Activated CD8-positive, alpha-beta T cell treated with anti-CD3 and anti-CD28 coated beads for 36 hours (primary cell): ENCODE measurements at regions of chr17 and their contacts with region 1.

Region 1: GRCh38 chr17:32783602-32784001 is 93.3 kb downstream of the MYO1D start:
- DNase-seq: no peak
- ATAC-seq: peak; percentile 34
- H3K4me3 Mint-ChIP-seq: no peak overlapping the region
- H3K27ac Mint-ChIP-seq: no peak overlapping the region
- H3K4me1 Mint-ChIP-seq: no peaks in the 10 kb centered on the region
- H3K27me3 Mint-ChIP-seq: no peaks in the 10 kb centered on the region
- CTCF ChIP-seq: peak; percentile 81

Region 2: GRCh38 chr17:32859857-32860525 is 76.4 kb after region 1 on chr17:
- CTCF ChIA-PET with region 1: interaction called, 10 read pairs
- POLR2A ChIA-PET with region 1: no interaction called
- intact Hi-C with region 1: no loop called
- DNase-seq: peak; percentile 21
- ATAC-seq: peak; percentile 91
- H3K4me3 Mint-ChIP-seq: no peak overlapping the region
- H3K27ac Mint-ChIP-seq: no peak overlapping the region
- H3K4me1 Mint-ChIP-seq: peaks cover 10% of the 10 kb centered on the region
- H3K27me3 Mint-ChIP-seq: peaks cover 3% of the 10 kb centered on the region
- CTCF ChIP-seq: no peak

Region 3: GRCh38 chr17:32909787-32910369 is 126.3 kb after region 1 on chr17:
- CTCF ChIA-PET with region 1: interaction called, 53 read pairs
- POLR2A ChIA-PET with region 1: interaction called, 3 read pairs
- intact Hi-C with region 1: no loop called
- DNase-seq: peak; percentile 86
- ATAC-seq: peak; percentile 86
- H3K4me3 Mint-ChIP-seq: no peak overlapping the region
- H3K27ac Mint-ChIP-seq: no peak overlapping the region
- H3K4me1 Mint-ChIP-seq: peaks cover 12% of the 10 kb centered on the region
- H3K27me3 Mint-ChIP-seq: peaks cover 10% of the 10 kb centered on the region
- CTCF ChIP-seq: peak; percentile 71

Region 4: DNA sequence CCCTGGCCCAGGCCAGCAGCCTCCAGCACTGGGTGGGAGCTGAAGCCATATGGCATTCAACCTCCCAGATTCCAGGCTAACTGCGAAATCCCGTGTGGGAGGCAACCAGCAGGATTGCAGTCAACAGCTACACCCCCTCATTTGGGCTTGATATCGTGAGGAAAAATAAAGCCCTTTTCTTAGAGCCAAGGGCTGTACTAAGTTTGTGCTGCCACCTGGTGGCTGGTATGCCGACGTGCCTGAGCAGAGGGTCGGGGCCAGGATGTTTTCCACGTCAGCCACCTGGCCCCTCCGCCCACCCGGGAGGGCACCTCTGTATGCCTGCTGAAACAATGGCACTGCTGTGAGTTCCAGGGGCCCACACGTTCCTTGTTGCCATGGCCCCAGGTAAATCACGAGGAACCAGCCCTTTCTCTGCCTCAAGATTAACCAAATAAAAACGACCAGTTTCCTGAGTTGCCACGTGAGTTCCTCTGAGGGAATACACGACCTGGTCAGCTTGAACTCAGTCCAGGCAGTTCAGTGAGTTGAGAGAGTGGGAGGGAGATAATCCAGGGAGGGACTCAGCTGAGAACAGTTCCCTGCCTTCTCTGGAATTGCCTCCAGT is 153.4 kb after region 1 on chr17:
- CTCF ChIA-PET with region 1: interaction called, 50 read pairs
- POLR2A ChIA-PET with region 1: interaction called, 4 read pairs
- intact Hi-C with region 1: loop called (anchors 5 kb)
- DNase-seq: peak; percentile 80
- ATAC-seq: peak; percentile 96
- H3K4me3 Mint-ChIP-seq: no peak overlapping the region
- H3K27ac Mint-ChIP-seq: no peak overlapping the region
- H3K4me1 Mint-ChIP-seq: peaks cover 3% of the 10 kb centered on the region
- H3K27me3 Mint-ChIP-seq: peaks cover 18% of the 10 kb centered on the region
- CTCF ChIP-seq: peak; percentile 96